Right ventricle myocardium inferior (tissue), 1 donor: ENCODE measurements at regions of chr2 and their contacts with region 1.

Region 1: GRCh38 chr2:156332534-156333273 is at the start of gene NR4A2:
- DNase-seq: peak; percentile 94
- ATAC-seq: peak; percentile 77
- total RNA-seq, gene NR4A2: 1.6 TPM

Region 2: GRCh38 chr2:156077041-156077735 is 255.5 kb before region 1 on chr2:
- intact Hi-C with region 1: no loop called
- DNase-seq: no peak
- ATAC-seq: no peak

Region 3: GRCh38 chr2:156400706-156401678 is 68.3 kb after region 1 on chr2:
- intact Hi-C with region 1: loop called (anchors 2 kb)
- DNase-seq: peak; percentile 72
- ATAC-seq: peak; percentile 92

Region 4: GRCh38 chr2:156459720-156460119 is 127.0 kb after region 1 on chr2:
- intact Hi-C with region 1: loop called (anchors 2 kb)
- DNase-seq: no peak
- ATAC-seq: peak; percentile 75

Region 5: GRCh38 chr2:156589381-156590079 is 256.8 kb after region 1 on chr2:
- intact Hi-C with region 1: loop called (anchors 5 kb)
- DNase-seq: no peak
- ATAC-seq: peak; percentile 37